ENCODE measurements at regions of chr1 and their contacts with region 1.

Region 1: DNA sequence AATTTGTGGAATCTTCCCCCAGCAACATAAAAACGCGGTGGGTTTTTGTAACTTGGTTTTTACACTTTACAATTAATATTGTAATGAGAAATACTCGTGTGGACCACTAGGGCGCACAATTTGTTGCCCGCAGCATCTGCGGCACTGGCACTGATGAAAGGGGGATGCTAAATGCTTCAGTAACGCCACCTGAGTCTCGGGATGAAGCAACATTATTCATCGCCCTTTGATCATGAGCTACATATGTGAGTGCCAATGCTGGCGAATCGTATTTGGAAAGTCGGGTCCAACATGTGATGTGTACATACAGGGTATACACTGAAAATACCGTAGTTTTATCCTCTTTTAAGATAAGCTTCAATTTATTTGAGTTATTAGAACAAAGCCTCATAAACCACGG is 34.2 kb upstream of the COX20 start:
- DNase-seq: peak in 1 of 2 donors; percentile 28
- H3K4me3 ChIP-seq: no peak overlapping the region
- H3K27ac ChIP-seq: no peak overlapping the region
- H3K4me1 ChIP-seq: no peaks in the 10 kb centered on the region
- H3K27me3 ChIP-seq: no peaks in the 10 kb centered on the region
- CTCF ChIP-seq: peak; percentile 25 to 52 (median 26)
- POLR2A ChIP-seq: no peak

Region 2: GRCh38 chr1:244599937-244600350 is 201.3 kb before region 1 on chr1:
- intact Hi-C with region 1: loop called (anchors 2 kb)
- DNase-seq: no peak
- H3K4me3 ChIP-seq: no peak overlapping the region
- H3K27ac ChIP-seq: no peak overlapping the region
- H3K4me1 ChIP-seq: no peaks in the 10 kb centered on the region
- H3K27me3 ChIP-seq: no peaks in the 10 kb centered on the region
- CTCF ChIP-seq: no peak
- POLR2A ChIP-seq: no peak

Region 3: DNA sequence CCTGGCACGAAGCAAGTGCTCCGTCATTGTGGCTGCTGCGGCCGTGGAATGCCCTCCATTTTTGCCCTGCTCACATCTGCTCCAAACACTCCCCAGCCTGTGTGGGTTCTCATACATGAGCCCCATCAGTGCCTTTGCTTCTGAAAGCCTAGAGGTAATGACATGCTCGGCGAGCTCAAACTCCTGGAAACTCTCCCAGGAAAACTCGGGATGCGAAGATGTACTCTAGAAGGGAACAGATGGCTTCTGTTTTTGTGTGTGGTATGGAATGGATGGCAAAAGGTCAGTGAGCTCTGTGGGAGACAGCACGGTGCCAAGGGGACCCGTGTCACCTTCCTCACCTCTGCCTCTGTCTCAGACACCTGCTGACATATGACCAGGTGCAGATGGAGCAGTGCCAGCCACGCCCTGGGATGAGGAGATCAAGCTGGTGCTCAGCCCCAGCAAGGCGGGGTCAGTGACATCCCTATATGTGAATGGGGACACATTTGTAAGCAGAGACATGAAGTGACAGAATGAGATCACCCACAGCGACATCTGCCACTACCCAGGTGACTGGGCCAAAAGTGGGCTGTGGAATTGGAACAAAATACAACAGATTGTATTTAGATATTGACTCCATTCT is 49.9 kb before region 1 on chr1:
- intact Hi-C with region 1: no loop called
- DNase-seq: no peak
- H3K4me3 ChIP-seq: no peak overlapping the region
- H3K27ac ChIP-seq: no peak overlapping the region
- H3K4me1 ChIP-seq: no peaks in the 10 kb centered on the region
- H3K27me3 ChIP-seq: no peaks in the 10 kb centered on the region
- CTCF ChIP-seq: no peak
- POLR2A ChIP-seq: no peak

Region 4: DNA sequence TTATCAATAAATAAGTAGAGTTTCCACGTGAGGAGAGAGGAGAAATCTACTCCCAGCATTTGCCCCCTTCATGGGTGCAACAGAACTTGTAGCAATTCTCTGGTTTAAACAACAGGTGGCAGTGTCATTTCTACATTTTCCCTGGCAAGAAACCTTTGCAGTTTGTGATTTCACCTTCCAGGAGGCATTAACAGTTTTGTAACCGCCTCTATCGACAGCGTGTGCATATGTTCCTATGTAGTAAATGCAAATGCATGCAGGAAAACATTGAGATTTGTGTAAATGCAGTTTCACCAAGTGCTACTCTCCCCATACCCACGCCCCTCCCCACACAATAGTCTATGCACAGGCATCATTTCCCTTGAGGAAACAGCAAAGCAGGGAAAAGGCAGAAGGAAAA is 1211.1 kb after region 1 on chr1:
- intact Hi-C with region 1: no loop called
- DNase-seq: no peak
- H3K4me3 ChIP-seq: no peak overlapping the region
- H3K27ac ChIP-seq: no peak overlapping the region
- H3K4me1 ChIP-seq: no peaks in the 10 kb centered on the region
- H3K27me3 ChIP-seq: no peaks in the 10 kb centered on the region
- CTCF ChIP-seq: peak in 2 of 3 donors; percentile 33 to 57
- POLR2A ChIP-seq: no peak